ENCODE measurements at regions of chr6 and their contacts with region 1.

Region 1: DNA sequence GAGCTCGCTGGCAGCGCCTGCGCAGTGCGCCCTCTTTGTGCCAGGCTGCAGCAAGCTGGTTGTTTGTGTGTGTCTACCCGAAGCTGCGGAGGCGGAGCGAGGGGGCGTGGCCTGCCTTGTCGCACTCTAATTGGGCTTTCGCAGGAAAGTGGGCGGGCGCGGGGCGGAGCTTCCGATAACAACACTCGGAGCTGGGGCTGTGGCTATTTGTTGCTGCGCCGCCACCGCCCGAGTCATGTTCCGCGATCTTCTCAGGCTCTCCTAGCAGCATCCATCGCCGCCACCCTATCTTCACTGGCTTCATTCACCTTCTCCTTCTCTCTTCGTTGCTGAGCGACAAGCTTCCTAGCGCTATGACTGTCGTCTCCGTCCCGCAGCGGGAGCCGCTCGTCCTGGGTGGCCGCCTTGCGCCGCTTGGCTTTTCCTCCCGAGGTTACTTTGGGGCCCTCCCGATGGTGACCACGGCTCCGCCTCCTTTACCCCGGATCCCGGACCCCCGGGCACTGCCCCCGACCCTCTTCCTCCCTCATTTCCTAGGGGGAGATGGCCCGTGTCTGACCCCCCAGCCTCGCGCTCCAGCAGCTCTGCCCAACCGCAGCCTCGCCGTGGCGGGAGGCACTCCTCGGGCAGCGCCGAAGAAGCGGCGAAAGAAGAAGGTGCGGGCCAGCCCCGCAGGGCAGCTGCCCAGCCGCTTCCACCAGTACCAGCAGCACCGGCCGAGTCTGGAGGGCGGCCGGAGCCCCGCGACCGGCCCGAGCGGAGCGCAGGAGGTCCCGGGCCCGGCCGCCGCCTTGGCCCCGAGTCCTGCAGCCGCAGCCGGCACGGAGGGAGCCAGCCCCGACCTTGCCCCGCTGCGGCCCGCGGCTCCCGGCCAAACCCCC is at the start of gene PNRC1:
- DNase-seq: peak; percentile 100
- H3K4me3 ChIP-seq: peak within 1 kb of the TSS; percentile 87 to 99 (median 97)
- H3K27ac ChIP-seq: peak within 1 kb of the TSS; percentile 98 to 100 (median 100)
- H3K4me1 ChIP-seq: peaks cover 15 to 32% of the 10 kb centered on the region in 2 donors
- H3K27me3 ChIP-seq: no peaks in the 10 kb centered on the region
- CTCF ChIP-seq: peak in 1 of 6 experiments; percentile 11
- POLR2A ChIP-seq: peak; percentile 99 to 100
- total RNA-seq, gene PNRC1: 79.6 to 359 (median 260) TPM

Region 2: DNA sequence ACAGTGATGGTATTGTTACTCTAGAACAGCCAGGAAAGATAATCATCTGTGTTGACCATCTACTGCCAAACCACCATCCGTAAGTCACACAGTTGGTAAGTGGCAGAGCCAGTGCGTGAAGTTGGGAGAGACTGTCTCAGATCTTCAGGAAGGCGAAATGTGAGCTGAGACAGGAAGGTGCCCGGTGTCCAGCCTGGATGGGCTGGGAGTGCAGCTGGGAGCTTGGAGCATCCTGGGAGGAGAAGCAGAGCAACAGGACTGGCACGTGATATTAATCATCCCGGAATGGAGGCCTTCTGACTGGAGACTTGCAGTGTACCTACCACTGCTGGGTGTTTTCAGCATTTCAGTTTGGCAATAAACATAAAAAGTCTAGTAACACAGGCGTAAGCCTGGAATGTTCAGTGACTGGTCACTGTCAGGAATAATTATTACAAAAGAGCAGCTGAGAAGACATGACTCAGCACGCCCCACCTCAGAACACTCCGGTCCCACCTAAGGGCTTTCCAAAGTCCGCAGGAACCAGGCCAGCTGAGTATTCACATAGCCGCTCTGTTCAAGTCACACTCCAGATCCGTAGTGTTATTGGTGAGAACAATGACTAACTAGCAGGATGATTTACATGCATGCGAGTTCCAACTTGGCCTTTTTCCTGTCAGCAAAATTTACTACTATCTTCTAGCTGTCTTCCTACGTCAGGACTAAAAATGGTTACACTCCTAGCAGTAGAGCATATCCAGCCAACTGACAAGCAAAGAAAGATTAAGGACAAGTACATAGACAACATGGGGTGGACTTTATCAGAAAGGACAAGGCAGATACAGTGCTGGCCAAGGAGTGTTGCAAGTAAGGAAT is 45.3 kb before region 1 on chr6:
- intact Hi-C with region 1: loop called in 1 of 2 experiments (anchors 5 kb)
- DNase-seq: peak; percentile 84 to 98 (median 95)
- H3K4me3 ChIP-seq: peak overlapping the region in 1 of 4 donors; percentile 31
- H3K27ac ChIP-seq: peak overlapping the region; percentile 80 to 99 (median 84)
- H3K4me1 ChIP-seq: peaks cover 18 to 22% of the 10 kb centered on the region in 2 donors
- H3K27me3 ChIP-seq: no peaks in the 10 kb centered on the region
- CTCF ChIP-seq: peak in 2 of 6 experiments; percentile 14 to 17
- POLR2A ChIP-seq: peak in 1 of 2 donors; percentile 59

Measured in adrenal gland (tissue), 19 donors.